ENCODE measurements at regions of chr2 and their contacts with region 1.

Region 1: DNA sequence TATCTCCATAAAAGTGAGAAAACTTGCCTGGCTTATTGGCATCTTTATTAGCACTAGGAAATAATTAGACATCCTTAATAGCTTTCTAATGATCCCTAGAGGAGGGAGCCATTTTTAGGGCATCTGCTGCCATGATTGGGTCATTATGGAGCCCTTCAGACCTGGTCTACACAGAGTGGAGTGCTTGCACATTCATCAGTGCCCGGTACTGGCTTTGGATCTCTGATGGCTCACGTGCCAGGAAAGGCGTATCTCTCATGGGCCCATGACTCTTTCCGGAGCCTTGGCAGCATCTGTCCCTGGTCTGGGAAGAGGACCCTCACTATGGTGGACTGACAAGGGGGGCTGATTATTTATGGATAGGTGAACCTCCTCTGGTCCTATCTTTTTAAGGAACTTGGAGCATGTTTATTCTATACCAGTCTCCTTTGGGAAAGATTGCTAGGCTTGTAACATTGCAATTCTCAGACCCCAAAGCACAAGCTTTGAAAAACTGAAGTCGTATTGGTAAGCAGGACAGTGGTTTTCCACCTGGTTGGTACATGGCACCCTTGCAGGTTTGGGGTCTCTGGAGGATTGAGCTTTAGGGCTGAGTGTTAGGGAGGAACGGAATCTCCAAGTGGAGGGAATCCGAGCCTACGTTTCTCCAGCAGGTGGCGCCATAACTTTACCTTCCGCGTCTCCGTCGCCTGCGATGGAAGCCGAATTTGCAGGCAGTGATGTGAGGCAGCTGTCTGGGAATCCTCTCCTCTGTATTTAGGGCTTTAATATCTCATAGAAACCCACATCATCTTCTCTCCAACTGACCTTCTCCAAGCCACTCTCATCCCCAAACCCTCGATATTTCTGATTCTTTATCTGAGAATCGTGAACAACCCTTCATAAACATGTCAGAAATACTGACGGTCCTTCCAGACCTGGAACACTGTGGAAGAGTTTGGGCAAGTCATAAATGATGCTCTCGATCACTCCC is 27.8 kb downstream of the SIX2 start:
- DNase-seq: no peak
- H3K4me3 ChIP-seq: no peak overlapping the region
- H3K27ac ChIP-seq: no peak overlapping the region
- H3K4me1 ChIP-seq: peaks cover 8% of the 10 kb centered on the region
- H3K27me3 ChIP-seq: no peaks in the 10 kb centered on the region
- CTCF ChIP-seq: peak; percentile 79 to 93 (median 88)
- POLR2A ChIP-seq: no peak

Region 2: DNA sequence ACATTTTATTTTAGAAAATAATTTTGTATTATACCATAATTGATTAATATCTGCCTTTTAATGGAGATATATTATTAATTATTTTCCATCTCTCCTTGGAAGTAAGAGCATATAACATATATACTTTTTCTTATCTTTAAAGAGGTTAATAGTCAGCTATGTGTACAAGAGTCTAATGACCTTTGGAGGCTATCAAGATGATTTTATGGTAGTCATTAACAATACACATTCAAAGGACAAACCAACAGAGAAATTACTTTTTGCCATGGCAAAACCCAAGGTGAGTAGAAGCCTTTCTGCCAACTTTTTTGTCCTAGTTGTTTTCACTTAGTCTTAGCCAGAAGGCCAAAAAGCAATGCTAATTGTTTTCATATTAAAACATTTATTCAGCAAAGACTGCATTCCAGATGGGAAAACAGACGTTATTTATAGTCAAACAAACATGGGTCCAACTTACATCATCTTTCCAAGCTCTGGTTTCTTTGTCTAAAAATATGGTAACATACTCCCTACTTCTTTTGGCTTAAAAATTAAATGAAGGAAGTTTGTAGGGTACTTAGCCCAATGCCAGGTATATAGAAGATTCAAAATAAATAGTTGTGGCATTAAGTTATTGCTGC is 1217.2 kb before region 1 on chr2:
- intact Hi-C with region 1: no loop called
- DNase-seq: no peak
- H3K4me3 ChIP-seq: no peak overlapping the region
- H3K27ac ChIP-seq: peak overlapping the region; percentile 69
- H3K4me1 ChIP-seq: peaks cover 17% of the 10 kb centered on the region
- H3K27me3 ChIP-seq: no peaks in the 10 kb centered on the region
- CTCF ChIP-seq: no peak
- POLR2A ChIP-seq: no peak

Region 3: DNA sequence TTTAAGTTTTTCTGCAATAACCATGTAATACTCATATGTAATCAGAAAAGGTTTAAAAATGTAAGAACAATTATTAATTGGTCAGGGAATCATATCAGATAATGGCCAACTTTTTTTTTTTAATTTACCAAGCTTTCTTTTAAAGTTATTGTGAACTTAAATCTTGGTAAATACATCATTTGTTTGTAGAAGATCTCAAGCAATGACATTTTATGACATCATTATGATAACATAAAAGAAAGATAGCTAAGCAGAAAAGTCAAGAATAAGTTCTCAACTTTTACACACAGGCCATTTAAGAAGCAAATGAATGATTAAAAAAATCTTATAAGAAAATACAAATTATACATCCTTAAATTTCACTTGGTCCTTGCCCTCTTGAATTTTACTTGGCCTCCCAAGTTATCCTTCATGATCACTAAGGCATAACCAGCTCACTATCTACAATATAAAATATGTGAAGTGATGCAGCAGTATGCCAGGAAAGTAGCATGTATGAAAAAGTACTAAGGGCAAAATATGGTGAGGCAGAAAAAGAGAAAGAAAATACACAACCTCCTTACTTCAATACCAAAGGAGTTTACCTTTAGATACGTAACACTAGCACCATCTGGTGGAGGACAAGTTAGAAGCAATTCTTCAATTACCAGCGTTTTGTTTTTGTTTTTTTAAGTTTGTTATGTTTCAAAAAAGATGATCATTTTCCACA is 513.0 kb after region 1 on chr2:
- intact Hi-C with region 1: loop called (anchors 2 kb)
- DNase-seq: no peak
- H3K4me3 ChIP-seq: no peak overlapping the region
- H3K27ac ChIP-seq: no peak overlapping the region
- H3K4me1 ChIP-seq: no peaks in the 10 kb centered on the region
- H3K27me3 ChIP-seq: no peaks in the 10 kb centered on the region
- CTCF ChIP-seq: peak; percentile 60 to 76 (median 70)
- POLR2A ChIP-seq: no peak